ENCODE measurements at regions of chr1 and their contacts with region 1.

Region 1: GRCh38 chr1:24536391-24536840 is 19.5 kb upstream of the NCMAP start:
- DNase-seq: no peak
- ATAC-seq: no peak
- H3K4me3 ChIP-seq: no peak overlapping the region
- H3K27ac ChIP-seq: no peak overlapping the region
- H3K4me1 ChIP-seq: peaks cover 17% of the 10 kb centered on the region
- H3K27me3 ChIP-seq: no peaks in the 10 kb centered on the region
- CTCF ChIP-seq: no peak

Region 2: DNA sequence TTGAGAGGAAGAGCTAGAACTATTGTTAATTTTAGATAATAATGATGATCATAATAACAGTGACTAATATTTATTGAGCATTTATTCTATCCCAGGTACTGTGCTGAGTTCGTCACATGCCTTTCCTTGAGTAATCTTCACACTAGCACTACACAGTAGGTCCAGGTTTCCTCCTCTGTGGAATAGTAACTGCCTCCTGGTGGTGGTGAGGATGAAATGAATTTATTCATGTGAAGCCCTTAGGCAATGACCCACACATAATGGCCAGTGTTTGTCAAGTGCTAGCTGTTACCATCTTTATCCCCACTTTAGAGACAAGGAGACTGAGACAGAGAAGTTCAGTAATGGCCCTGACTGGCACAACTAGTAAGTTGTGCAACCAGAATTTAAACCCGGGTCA is 114.9 kb before region 1 on chr1:
- CTCF ChIA-PET with region 1: no interaction called
- POLR2A ChIA-PET with region 1: no interaction called
- intact Hi-C with region 1: no loop called
- DNase-seq: peak; percentile 28
- ATAC-seq: no peak
- H3K4me3 ChIP-seq: no peak overlapping the region
- H3K27ac ChIP-seq: no peak overlapping the region
- H3K4me1 ChIP-seq: peaks cover 31% of the 10 kb centered on the region
- H3K27me3 ChIP-seq: no peaks in the 10 kb centered on the region
- CTCF ChIP-seq: peak; percentile 51

Region 3: GRCh38 chr1:24567792-24568388 is 31.5 kb after region 1 on chr1:
- CTCF ChIA-PET with region 1: interaction called, 5 read pairs
- POLR2A ChIA-PET with region 1: interaction called, 10 read pairs
- intact Hi-C with region 1: no loop called
- DNase-seq: peak; percentile 84
- ATAC-seq: peak; percentile 97
- H3K4me3 ChIP-seq: no peak overlapping the region; the same call in 1 of the 2 replicates
- H3K27ac ChIP-seq: 0 out of 2 replicates have a peak overlapping the region, but pooled peaks have one; percentile 1
- H3K4me1 ChIP-seq: peaks cover 39% of the 10 kb centered on the region
- H3K27me3 ChIP-seq: no peaks in the 10 kb centered on the region
- CTCF ChIP-seq: peak; percentile 51